Activated CD4-positive, alpha-beta memory T cell treated with anti-CD3 and anti-CD28 coated beads for 36 hours (primary cell): ENCODE measurements at regions of chr1 and their contacts with region 1.

Region 1: GRCh38 chr1:39408641-39409054 is 82.8 kb upstream of the BMP8A start:
- DNase-seq: peak; percentile 86
- H3K4me3 Mint-ChIP-seq: peak overlapping the region; percentile 82
- H3K27ac Mint-ChIP-seq: no peak overlapping the region
- H3K4me1 Mint-ChIP-seq: peaks cover 68% of the 10 kb centered on the region
- H3K27me3 Mint-ChIP-seq: no peaks in the 10 kb centered on the region

Region 2: DNA sequence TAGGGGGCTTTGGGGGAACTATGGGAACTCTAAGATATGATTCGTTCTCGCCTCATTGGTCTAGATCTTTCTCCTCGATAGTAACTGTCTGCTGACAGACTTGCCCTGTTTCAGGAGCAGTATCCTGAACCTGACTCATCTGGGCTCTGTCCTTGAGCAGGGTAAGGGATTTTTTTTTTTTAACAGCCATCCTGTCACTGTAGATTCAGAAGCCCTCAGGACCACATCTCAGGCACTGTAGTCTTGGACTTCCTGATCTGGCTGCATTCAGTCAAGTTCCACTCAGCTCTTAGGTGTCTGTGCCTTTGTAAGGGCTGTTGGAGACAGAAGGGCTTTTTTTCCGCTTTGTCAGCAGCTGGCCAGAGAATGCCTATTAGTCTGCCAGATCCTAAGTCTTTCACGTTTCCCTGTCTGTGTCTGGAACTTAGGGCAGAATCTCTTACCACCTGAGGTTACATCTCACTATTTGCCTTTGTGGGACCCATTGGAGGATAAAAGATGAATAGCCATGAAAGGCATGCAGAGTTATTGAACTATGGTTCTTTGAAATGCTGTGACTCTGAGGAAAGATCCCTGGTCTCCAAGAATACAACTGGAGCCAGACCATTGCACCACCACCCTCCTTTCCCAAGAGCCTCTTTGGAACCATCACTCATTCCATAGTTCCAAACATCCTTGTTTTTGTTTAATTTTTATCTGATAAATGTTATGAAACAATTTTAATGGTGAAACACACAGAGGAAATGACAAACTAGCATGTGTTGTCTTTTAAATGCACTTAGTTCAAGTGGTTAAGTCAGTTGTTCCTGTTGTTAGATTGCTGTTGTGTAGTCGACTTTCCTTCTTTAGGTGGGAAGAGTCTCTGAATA is 253.9 kb before region 1 on chr1:
- CTCF ChIA-PET with region 1: no interaction called
- POLR2A ChIA-PET with region 1: no interaction called
- intact Hi-C with region 1: no loop called
- DNase-seq: no peak
- H3K4me3 Mint-ChIP-seq: no peak overlapping the region
- H3K27ac Mint-ChIP-seq: no peak overlapping the region
- H3K4me1 Mint-ChIP-seq: no peaks in the 10 kb centered on the region
- H3K27me3 Mint-ChIP-seq: no peaks in the 10 kb centered on the region

Region 3: GRCh38 chr1:39378377-39378776 is 30.3 kb before region 1 on chr1:
- CTCF ChIA-PET with region 1: interaction called, 12 read pairs
- POLR2A ChIA-PET with region 1: interaction called, 3 read pairs
- intact Hi-C with region 1: no loop called
- DNase-seq: no peak
- H3K4me3 Mint-ChIP-seq: no peak overlapping the region
- H3K27ac Mint-ChIP-seq: no peak overlapping the region
- H3K4me1 Mint-ChIP-seq: no peaks in the 10 kb centered on the region
- H3K27me3 Mint-ChIP-seq: no peaks in the 10 kb centered on the region

Region 4: GRCh38 chr1:39391691-39392679 is 16.7 kb before region 1 on chr1:
- CTCF ChIA-PET with region 1: interaction called, 22 read pairs
- POLR2A ChIA-PET with region 1: no interaction called
- intact Hi-C with region 1: loop called (anchors 2 kb)
- DNase-seq: peak; percentile 37
- H3K4me3 Mint-ChIP-seq: no peak overlapping the region
- H3K27ac Mint-ChIP-seq: peak overlapping the region; percentile 24
- H3K4me1 Mint-ChIP-seq: peaks cover 67% of the 10 kb centered on the region
- H3K27me3 Mint-ChIP-seq: no peaks in the 10 kb centered on the region

Region 5: DNA sequence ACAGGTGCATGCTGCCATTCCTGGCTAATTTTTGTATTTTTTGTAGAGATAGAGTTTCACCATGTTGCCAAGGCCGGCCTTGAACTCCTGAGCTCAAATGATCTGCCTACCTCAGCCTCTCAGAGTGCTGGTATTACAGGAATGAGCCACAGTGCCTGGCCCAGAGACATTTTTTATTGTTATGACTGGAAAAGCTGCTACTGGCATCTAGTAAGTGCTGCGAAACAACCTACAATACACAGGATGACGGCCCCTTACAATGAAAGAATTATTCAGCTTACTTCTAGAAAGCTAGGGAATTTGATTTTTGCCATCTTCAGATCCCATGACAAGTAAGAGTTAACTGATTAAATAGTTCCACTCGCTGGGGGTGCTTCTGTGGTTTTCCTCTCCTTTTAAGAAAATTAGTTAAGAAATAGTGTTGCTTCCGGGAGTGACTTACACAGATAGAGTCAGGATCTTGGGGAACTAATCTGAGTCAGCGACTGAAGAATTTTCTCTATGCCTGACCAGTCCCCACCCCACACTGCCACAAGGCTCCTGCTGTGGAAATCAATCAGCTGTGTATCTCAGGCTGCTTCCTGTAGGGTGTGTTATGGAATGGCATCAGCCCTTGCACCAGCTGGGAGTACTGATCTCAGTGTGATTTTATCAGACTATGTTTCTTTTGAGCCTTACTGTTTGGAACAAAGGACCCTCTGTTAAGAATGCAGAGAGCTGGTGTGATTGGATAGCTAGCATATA is 10.2 kb before region 1 on chr1:
- CTCF ChIA-PET with region 1: interaction called, 51 read pairs
- POLR2A ChIA-PET with region 1: interaction called, 17 read pairs
- intact Hi-C with region 1: loop called (anchors 2 kb)
- DNase-seq: peak; percentile 69
- H3K4me3 Mint-ChIP-seq: peak overlapping the region; percentile 32
- H3K27ac Mint-ChIP-seq: peak overlapping the region; percentile 86
- H3K4me1 Mint-ChIP-seq: peaks cover 62% of the 10 kb centered on the region
- H3K27me3 Mint-ChIP-seq: no peaks in the 10 kb centered on the region

Region 6: GRCh38 chr1:39427374-39427773 is 18.7 kb after region 1 on chr1:
- CTCF ChIA-PET with region 1: interaction called, 24 read pairs
- POLR2A ChIA-PET with region 1: no interaction called
- intact Hi-C with region 1: no loop called
- DNase-seq: no peak
- H3K4me3 Mint-ChIP-seq: no peak overlapping the region
- H3K27ac Mint-ChIP-seq: no peak overlapping the region
- H3K4me1 Mint-ChIP-seq: peaks cover 18% of the 10 kb centered on the region
- H3K27me3 Mint-ChIP-seq: no peaks in the 10 kb centered on the region